K562 (cell line): ENCODE measurements at regions of chr9 and their contacts with region 1.

Region 1: GRCh38 chr9:34701769-34702736 is 7.9 kb downstream of the CCL21 start:
- DNase-seq: peak; percentile 76 to 79 (median 77)
- ATAC-seq: peak; percentile 95
- H3K4me3 ChIP-seq: peak overlapping the region; percentile 46
- H3K27ac ChIP-seq: no peak overlapping the region
- H3K4me1 ChIP-seq: peaks cover 0 to 13% of the 10 kb centered on the region in 2 experiments; a peak in 3 of 5 replicates
- H3K27me3 ChIP-seq: peaks cover 0 to 5% of the 10 kb centered on the region in 2 experiments; a peak in 2 of 5 replicates
- CTCF ChIP-seq: peak; percentile 92 to 95 (median 93)
- EP300 ChIP-seq: no peak
- POLR2A ChIP-seq: no peak
- RAD21 ChIP-seq: peak; percentile 54 to 76

Region 2: GRCh38 chr9:34611829-34612630 is 90.0 kb before region 1 on chr9 and contains the start of gene RPP25L:
- CTCF ChIA-PET with region 1: interaction called, 15 read pairs
- POLR2A ChIA-PET with region 1: no interaction called
- in situ Hi-C with region 1: no loop called
- intact Hi-C with region 1: loop called (anchors 10 kb)
- DNase-seq: peak; percentile 85 to 90 (median 88)
- ATAC-seq: peak; percentile 96
- H3K4me3 ChIP-seq: peak within 1 kb of the TSS; percentile 60
- H3K27ac ChIP-seq: peak within 1 kb of the TSS; percentile 86
- H3K4me1 ChIP-seq: peaks cover 7 to 19% of the 10 kb centered on the region in 2 experiments; a peak in 4 of 5 replicates
- H3K27me3 ChIP-seq: no peaks in the 10 kb centered on the region
- CTCF ChIP-seq: no peak
- EP300 ChIP-seq: no peak
- POLR2A ChIP-seq: peak; percentile 87
- RAD21 ChIP-seq: no peak
- polyA plus RNA-seq, gene RPP25L: 16.3 to 29.0 TPM

Region 3: GRCh38 chr9:34675048-34675714 is 26.9 kb before region 1 on chr9:
- CTCF ChIA-PET with region 1: interaction called, 20 read pairs
- POLR2A ChIA-PET with region 1: interaction called, 3 read pairs
- in situ Hi-C with region 1: no loop called
- intact Hi-C with region 1: loop called (anchors 1 kb)
- DNase-seq: peak; percentile 68 to 85 (median 76)
- ATAC-seq: peak; percentile 100
- H3K4me3 ChIP-seq: no peak overlapping the region
- H3K27ac ChIP-seq: no peak overlapping the region
- H3K4me1 ChIP-seq: peaks cover 0 to 4% of the 10 kb centered on the region in 2 experiments; a peak in 1 of 5 replicates
- H3K27me3 ChIP-seq: no peaks in the 10 kb centered on the region
- CTCF ChIP-seq: peak; percentile 85 to 99 (median 99)
- EP300 ChIP-seq: no peak
- POLR2A ChIP-seq: no peak
- RAD21 ChIP-seq: peak; percentile 48 to 76